ENCODE measurements at regions of chr9 and their contacts with region 1.

Region 1: DNA sequence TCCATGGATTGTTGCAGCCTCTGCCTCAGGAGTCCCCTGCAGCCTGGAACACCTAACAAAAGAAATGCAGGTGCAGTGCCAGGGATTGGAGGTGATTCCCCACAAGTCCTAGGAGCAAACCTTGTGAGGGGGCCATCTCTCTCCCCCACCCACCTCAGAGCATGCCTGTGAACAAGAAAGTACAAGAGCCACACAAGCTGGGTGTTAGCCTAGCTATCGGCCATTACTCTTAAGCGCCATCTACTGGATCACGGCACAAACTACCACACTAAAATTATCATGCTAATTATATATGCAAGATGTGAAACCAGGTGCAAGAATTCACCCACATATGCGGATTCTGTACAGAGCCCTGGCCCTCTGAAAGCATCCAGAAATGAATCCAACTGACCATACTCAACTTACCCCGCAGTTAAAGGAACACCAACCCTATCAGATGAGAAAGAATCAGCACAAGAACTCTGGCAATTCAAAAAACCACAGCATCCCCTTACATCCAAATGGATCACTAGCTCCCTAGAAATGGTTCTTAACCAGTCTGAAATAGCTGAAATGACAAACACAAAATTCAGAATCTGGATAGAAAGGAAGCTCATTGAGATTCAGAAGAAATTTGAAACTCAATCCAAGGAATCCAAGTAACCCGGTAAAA is 16.5 kb upstream of the PRSS3 start:
- DNase-seq: peak; percentile 67
- ATAC-seq: peak; percentile 96
- H3K4me3 Mint-ChIP-seq: no peak overlapping the region
- H3K27ac Mint-ChIP-seq: no peak overlapping the region
- H3K4me1 Mint-ChIP-seq: peaks cover 3% of the 10 kb centered on the region
- H3K27me3 Mint-ChIP-seq: peaks cover 2% of the 10 kb centered on the region
- CTCF ChIP-seq: peak; percentile 82

Region 2: GRCh38 chr9:33535541-33535940 is 243.3 kb before region 1 on chr9:
- CTCF ChIA-PET with region 1: no interaction called
- POLR2A ChIA-PET with region 1: no interaction called
- intact Hi-C with region 1: no loop called
- DNase-seq: no peak
- ATAC-seq: no peak
- H3K4me3 Mint-ChIP-seq: no peak overlapping the region
- H3K27ac Mint-ChIP-seq: no peak overlapping the region
- H3K4me1 Mint-ChIP-seq: no peaks in the 10 kb centered on the region
- H3K27me3 Mint-ChIP-seq: peaks cover 5% of the 10 kb centered on the region
- CTCF ChIP-seq: no peak

Region 3: DNA sequence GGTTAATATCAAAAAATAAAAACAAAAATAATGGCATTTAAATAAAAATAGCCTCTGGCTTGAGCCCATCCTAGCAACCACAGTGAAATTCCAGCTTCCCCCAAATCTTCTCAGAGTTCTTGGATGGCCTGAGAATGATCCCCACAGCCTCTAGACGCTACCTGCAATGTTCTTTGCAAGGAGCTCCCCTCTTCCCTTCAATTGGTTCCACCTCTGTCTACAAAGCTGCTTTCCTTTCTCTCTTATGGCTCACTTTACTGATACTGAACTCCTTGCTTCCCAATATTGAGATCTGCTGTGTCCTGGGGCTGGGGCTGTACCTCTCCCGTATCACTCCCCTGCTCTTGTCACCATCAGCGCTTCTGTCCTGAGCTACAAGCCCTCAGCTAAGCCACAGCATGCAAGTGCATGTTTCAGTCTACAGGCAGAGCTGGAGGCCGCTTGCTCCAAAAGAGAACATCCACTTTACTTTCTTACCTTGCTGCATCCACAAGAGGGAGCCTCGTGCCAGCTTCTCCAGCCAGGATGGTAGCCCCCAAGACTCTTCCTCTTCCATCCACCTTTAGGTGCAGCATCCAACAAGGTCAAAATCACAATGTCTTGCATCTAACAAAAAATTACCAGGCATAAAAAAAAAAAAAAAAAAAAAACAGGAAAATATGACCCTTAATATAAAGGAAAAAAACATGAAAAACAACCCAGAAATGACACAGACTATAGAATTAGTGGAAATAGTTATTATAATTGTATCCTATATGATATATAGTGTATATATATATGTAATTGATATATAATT is 40.8 kb before region 1 on chr9:
- CTCF ChIA-PET with region 1: interaction called, 32 read pairs
- POLR2A ChIA-PET with region 1: no interaction called
- intact Hi-C with region 1: loop called (anchors 5 kb)
- DNase-seq: peak; percentile 48
- ATAC-seq: no peak
- H3K4me3 Mint-ChIP-seq: no peak overlapping the region
- H3K27ac Mint-ChIP-seq: no peak overlapping the region
- H3K4me1 Mint-ChIP-seq: no peaks in the 10 kb centered on the region
- H3K27me3 Mint-ChIP-seq: peaks cover 3% of the 10 kb centered on the region
- CTCF ChIP-seq: peak; percentile 55

Region 4: DNA sequence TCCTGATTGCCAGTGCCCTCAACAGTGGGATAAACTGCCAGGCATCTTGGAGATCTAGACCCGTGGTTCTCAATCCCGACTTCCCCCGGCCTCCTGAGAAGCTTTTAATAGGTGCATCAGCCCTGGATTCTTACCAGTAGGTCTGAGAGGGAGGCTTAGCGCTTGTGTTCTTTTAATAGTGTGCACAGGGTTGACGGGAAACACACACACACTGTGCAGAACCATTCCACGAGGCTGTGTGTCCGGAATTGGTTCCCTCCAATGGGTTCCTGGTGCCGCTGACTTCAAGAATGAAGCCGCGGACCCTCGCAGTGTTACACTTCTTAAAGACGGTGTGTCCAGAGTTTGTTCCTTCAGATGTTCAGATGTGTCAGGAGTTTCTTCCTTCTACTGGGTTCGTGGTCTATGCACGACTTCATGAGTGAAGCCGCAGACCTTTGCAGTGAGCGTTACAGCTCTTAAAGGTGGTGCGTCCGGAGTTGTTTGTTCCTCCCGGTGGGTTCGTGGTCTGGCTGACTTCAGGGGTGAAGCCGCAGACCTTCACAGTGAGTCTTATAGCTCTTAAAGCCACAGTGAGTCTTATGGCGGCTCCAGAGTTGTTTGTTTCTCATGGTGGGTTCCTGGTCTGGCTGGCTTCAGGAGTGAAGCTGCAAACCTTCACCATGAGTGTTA is 30.1 kb before region 1 on chr9:
- CTCF ChIA-PET with region 1: interaction called, 11 read pairs
- POLR2A ChIA-PET with region 1: no interaction called
- intact Hi-C with region 1: loop called (anchors 5 kb)
- DNase-seq: peak; percentile 83
- ATAC-seq: peak; percentile 76
- H3K4me3 Mint-ChIP-seq: peak overlapping the region; percentile 74
- H3K27ac Mint-ChIP-seq: peak overlapping the region; percentile 56
- H3K4me1 Mint-ChIP-seq: peaks cover 36% of the 10 kb centered on the region
- H3K27me3 Mint-ChIP-seq: peaks cover 53% of the 10 kb centered on the region
- CTCF ChIP-seq: no peak